Left cardiac atrium (tissue), 4 donors: ENCODE measurements at regions of chr9 and their contacts with region 1.

Region 1: GRCh38 chr9:94783102-94783664 is 56.7 kb downstream of the AOPEP start:
- DNase-seq: peak; percentile 76
- ATAC-seq: peak; percentile 87 to 90

Region 2: DNA sequence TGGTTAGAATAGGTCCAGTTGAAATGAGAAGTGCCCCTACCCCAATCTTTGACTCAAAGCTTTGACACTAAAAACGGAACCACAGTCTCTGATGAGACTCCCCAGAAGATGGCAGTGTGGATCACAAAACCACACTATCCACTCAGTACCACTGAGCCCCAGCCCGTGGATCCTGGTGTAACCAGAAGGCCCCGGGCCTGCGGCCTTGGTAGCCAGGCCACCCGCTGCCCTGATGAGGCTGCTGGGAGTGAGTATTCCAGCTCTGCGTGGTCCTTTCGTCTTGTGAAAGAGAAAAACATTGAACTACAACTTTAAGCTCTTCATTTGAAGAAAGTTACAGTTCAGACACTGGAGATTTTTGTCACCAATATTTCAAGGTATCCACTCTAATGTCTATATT is 101.7 kb before region 1 on chr9:
- intact Hi-C with region 1: loop called in 1 of 2 experiments (anchors 5 kb)
- DNase-seq: peak; percentile 84
- ATAC-seq: peak; percentile 96 to 99

Region 3: DNA sequence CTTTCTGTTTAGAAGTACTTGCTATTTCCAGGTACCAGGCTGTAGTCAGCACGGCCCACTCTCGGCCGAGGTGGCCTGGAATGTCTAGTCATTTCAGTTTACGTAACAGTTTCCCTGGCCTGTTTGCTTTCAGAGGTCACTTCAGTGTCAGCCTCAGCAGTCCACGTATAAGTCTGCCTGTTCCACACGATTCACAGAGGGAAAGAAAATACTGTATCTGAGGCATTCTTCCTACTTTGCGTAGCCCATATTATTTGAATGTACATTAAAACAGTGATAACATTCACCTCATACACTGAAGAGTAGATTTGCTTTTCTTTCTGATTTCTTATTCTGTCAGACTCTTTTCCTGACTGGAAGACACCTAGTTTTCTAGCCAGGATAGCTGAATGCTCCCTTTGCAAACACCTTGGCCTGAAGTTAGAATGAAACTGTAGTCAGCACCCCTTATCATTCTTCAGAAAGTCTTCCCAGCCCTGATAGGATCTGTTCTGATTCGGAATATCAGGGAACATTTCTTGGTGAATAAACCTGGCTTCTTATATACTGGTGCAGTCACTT is 84.2 kb after region 1 on chr9:
- intact Hi-C with region 1: loop called in 1 of 2 experiments (anchors 5 kb)
- DNase-seq: peak; percentile 72
- ATAC-seq: peak; percentile 75 to 82

Region 4: DNA sequence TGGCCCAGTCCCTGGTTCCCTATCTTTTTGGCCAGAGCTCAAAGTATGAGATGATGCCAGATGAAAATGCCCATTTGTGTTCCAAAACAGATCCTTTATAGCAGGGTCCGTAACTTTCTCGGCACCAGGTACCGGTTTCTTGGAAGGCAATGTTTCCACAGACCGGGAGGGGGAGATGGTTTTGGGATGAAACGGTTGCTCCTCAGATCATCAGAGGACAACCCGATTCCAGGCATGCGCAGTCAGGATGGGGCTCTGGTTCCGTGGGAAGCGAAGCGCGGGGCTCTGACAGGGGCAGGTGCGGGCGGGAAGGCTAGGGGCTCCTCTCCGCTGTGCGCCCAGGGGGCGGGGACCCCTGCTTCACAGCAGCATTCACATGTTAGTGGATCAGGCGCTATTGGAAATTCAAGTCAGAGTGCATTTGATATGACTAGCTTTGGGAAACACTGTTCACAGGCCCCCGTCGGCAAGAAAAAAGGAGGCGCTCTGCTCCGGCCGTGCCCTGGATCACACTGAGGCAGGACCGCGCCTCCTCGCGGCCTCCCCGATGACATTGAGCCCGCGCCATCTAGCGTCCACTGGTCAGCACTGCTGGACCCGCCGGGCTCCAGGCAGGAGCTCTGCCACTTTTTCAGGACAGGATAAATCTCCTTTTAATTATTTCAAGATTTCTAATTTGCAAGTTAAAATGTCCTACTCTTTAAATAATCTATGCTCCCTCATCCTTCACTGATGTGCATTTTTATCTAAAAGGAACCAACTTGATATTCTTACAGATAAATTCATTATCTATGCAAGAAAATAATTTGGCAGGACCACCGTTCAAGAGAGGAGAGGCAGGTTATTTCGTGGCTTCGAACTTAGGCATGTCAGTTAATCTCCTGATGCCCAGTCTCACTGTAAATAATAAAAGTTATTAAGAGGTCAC is 344.3 kb after region 1 on chr9:
- intact Hi-C with region 1: loop called (anchors 5 to 10 kb)
- DNase-seq: peak; percentile 91
- ATAC-seq: peak; percentile 91 to 93